Endothelial cell of umbilical vein (primary cell): ENCODE measurements at regions of chr9 and their contacts with region 1.

Region 1: GRCh38 chr9:131727184-131727759 is 12.6 kb downstream of the RAPGEF1 start:
- DNase-seq: peak; percentile 70
- H3K4me3 ChIP-seq: no peak overlapping the region
- H3K27ac ChIP-seq: peak overlapping the region; percentile 45
- H3K4me1 ChIP-seq: peaks cover 42% of the 10 kb centered on the region
- H3K27me3 ChIP-seq: no peaks in the 10 kb centered on the region
- CTCF ChIP-seq: no peak
- POLR2A ChIP-seq: no peak

Region 2: GRCh38 chr9:131517761-131518190 is 209.5 kb before region 1 on chr9:
- CTCF ChIA-PET with region 1: no interaction called
- POLR2A ChIA-PET with region 1: no interaction called
- dilution Hi-C with region 1: no loop called
- intact Hi-C with region 1: no loop called
- DNase-seq: no peak
- H3K4me3 ChIP-seq: no peak overlapping the region
- H3K27ac ChIP-seq: no peak overlapping the region
- H3K4me1 ChIP-seq: no peaks in the 10 kb centered on the region
- H3K27me3 ChIP-seq: no peaks in the 10 kb centered on the region
- CTCF ChIP-seq: no peak
- POLR2A ChIP-seq: no peak

Region 3: DNA sequence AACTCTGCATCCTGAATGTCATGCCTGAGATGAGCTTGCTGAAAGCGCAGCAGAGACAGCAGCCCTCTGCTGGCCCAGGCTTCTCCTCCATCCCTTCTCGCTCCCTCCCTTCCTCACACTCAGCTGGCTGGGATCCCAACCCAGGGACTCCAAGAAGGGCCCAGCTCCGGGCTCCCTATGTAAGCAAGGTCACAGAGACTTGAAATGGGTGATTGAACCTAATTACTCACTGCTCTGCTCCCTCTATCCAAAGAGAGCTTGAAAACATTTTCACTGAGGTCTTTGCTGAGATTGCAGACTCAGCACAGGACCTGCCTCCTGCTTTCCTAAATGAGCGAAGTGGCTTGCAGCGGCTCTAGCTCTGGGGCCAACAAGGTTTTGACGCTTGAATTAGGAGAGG is 30.2 kb before region 1 on chr9:
- CTCF ChIA-PET with region 1: interaction called, 12 read pairs
- POLR2A ChIA-PET with region 1: no interaction called
- dilution Hi-C with region 1: no loop called
- intact Hi-C with region 1: no loop called
- DNase-seq: no peak
- H3K4me3 ChIP-seq: no peak overlapping the region
- H3K27ac ChIP-seq: no peak overlapping the region
- H3K4me1 ChIP-seq: peaks cover 14% of the 10 kb centered on the region
- H3K27me3 ChIP-seq: no peaks in the 10 kb centered on the region
- CTCF ChIP-seq: peak in 1 of 2 donors; percentile 3
- POLR2A ChIP-seq: no peak